ENCODE measurements at regions of chr17 and their contacts with region 1.

Region 1: DNA sequence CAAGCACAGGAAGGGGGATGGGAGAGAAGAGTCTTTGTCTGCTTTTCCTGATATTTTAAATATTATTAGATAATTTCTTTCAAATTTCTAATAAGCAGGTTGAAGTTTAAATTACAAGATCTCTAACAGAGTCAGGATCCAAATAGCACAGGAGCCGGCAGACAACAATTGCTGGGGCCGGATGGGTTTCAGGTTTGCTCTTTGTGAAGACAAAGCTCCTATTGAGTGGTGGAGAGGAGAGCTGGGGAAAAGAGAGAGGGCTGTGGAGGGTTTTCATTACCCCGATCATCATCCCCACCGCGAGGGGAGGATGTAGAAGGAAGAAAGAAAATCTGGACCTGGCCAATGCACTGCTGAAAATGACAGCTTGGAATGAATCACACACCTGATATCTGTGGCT is 197.3 kb downstream of the SOX9 start:
- DNase-seq: no peak
- ATAC-seq: peak; percentile 13
- H3K4me3 ChIP-seq: no peak overlapping the region
- H3K27ac ChIP-seq: no peak overlapping the region
- H3K4me1 ChIP-seq: peaks cover 16% of the 10 kb centered on the region
- H3K27me3 ChIP-seq: no peaks in the 10 kb centered on the region
- CTCF ChIP-seq: no peak
- EP300 ChIP-seq: 0 out of 4 replicates have a peak, but pooled peaks of 1 of the 2 experiments have one; percentile 4
- POLR2A ChIP-seq: no peak
- RAD21 ChIP-seq: no peak

Region 2: DNA sequence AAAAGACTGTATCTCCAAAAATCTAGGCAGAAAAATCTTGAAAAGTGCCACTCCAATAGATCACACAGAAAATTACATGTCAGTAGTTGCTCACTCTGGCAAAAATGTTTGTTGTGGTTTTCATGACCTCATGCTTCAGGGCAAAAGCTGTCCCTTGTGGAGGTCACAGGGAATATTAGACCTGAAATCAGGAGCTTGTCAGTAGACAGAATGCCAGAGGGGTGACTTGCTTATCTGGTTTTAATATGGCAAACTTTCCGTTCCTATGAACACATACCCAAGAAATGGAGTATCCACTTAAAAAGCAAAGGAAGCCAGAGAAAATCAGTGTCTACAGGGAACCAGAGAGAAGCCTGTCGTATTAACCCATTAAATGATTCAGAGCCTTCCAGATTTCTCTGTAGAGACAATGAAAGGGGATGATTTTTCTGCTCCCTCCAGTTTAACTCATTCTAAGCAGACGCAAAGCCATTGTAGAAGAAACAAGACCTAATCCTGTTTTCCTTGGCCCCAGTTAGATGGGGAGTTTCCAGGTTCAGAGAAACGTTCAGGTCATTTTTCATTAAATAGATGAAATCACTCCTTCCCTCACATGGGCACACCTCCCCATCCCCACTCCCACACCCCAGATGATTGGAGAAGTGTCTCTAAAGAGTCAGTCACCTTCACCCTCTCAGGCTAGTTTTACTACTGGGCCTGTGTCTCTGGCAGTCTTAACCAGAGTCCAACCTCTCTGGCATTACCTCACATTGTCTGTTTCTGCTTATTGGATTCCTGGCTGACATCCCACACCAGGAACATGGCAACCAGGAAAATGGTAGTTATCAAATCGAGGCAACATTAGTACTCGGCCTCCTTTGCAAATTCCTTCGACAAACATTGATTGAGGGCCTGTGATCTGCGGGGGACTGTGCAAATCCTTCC is 191.3 kb before region 1 on chr17:
- CTCF ChIA-PET with region 1: no interaction called
- POLR2A ChIA-PET with region 1: no interaction called
- RAD21 ChIA-PET with region 1: interaction called, 13 read pairs
- SMC1A ChIA-PET with region 1: interaction called, 5 read pairs
- in situ Hi-C with region 1: no loop called
- intact Hi-C with region 1: loop called (anchors 2 kb)
- DNase-seq: no peak
- ATAC-seq: peak; percentile 31; the same call in 2 of the 3 replicates
- H3K4me3 ChIP-seq: no peak overlapping the region
- H3K27ac ChIP-seq: no peak overlapping the region
- H3K4me1 ChIP-seq: no peaks in the 10 kb centered on the region
- H3K27me3 ChIP-seq: no peaks in the 10 kb centered on the region
- CTCF ChIP-seq: no peak
- EP300 ChIP-seq: no peak
- POLR2A ChIP-seq: no peak
- RAD21 ChIP-seq: no peak

Region 3: DNA sequence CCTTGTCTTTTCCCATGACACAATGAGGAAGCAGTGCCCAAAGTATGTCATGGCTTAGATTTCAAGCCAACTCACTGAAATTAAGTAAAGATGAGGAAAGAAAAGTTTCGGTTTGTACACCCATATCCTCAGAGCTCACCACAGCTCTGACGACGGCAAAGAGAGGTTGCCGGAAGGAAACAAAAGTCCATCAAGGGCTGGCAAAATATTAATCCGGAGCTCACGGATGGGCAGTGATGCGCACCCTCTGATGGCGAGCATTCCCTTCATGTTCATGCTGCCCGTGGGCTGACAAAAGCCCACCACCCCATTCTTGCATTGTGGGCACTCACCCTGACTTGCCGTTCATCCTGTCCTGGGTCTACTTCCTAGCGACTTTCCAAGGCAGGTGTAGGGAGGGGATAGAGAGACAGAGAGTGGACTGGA is 94.3 kb before region 1 on chr17:
- CTCF ChIA-PET with region 1: no interaction called
- POLR2A ChIA-PET with region 1: no interaction called
- RAD21 ChIA-PET with region 1: no interaction called
- SMC1A ChIA-PET with region 1: no interaction called
- in situ Hi-C with region 1: no loop called
- intact Hi-C with region 1: no loop called
- DNase-seq: no peak
- ATAC-seq: no peak
- H3K4me3 ChIP-seq: no peak overlapping the region
- H3K27ac ChIP-seq: no peak overlapping the region
- H3K4me1 ChIP-seq: no peaks in the 10 kb centered on the region
- H3K27me3 ChIP-seq: peaks cover 4 to 5% of the 10 kb centered on the region in 2 experiments
- CTCF ChIP-seq: no peak
- EP300 ChIP-seq: no peak
- POLR2A ChIP-seq: no peak
- RAD21 ChIP-seq: no peak

Region 4: DNA sequence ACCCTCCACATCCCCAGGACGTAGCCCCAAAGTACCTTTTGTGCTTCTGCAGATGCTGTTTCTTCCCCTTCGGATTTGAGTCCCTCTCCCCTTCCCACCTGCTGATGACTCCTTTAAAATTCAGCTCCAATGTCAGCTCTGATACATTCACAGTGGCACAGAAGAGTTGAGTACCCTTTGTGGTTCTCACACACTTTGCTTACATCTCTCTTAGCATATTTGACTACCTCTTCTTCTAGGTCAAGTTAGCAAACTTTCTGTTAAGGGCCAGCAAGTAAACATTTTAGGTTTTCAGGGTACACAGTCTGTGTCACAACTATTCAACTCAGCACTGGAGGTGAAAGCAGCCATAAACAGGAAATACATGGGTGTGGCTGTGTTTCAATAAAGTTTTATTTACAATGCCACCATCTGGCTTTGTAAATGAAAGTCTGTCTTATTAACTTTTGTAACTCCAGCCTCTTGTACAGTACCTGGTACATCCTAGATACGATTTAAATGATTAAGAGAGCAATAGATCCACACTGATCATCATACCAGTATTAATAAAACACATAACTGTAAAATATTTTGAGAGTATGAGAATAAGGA is 35.6 kb before region 1 on chr17:
- CTCF ChIA-PET with region 1: no interaction called
- POLR2A ChIA-PET with region 1: no interaction called
- RAD21 ChIA-PET with region 1: no interaction called
- SMC1A ChIA-PET with region 1: no interaction called
- in situ Hi-C with region 1: no loop called
- intact Hi-C with region 1: no loop called
- DNase-seq: no peak
- ATAC-seq: no peak
- H3K4me3 ChIP-seq: no peak overlapping the region
- H3K27ac ChIP-seq: no peak overlapping the region
- H3K4me1 ChIP-seq: no peaks in the 10 kb centered on the region
- H3K27me3 ChIP-seq: no peaks in the 10 kb centered on the region
- CTCF ChIP-seq: no peak
- EP300 ChIP-seq: no peak
- POLR2A ChIP-seq: no peak
- RAD21 ChIP-seq: no peak

Region 5: GRCh38 chr17:72306037-72306436 is 12.1 kb before region 1 on chr17:
- CTCF ChIA-PET with region 1: interaction called, 8 read pairs
- POLR2A ChIA-PET with region 1: no interaction called
- RAD21 ChIA-PET with region 1: interaction called, 3 read pairs
- SMC1A ChIA-PET with region 1: interaction called, 13 read pairs
- in situ Hi-C with region 1: no loop called
- intact Hi-C with region 1: no loop called
- DNase-seq: no peak
- ATAC-seq: no peak
- H3K4me3 ChIP-seq: no peak overlapping the region
- H3K27ac ChIP-seq: no peak overlapping the region
- H3K4me1 ChIP-seq: peaks cover 15% of the 10 kb centered on the region
- H3K27me3 ChIP-seq: no peaks in the 10 kb centered on the region
- CTCF ChIP-seq: no peak
- EP300 ChIP-seq: no peak
- POLR2A ChIP-seq: no peak
- RAD21 ChIP-seq: no peak

Region 6: DNA sequence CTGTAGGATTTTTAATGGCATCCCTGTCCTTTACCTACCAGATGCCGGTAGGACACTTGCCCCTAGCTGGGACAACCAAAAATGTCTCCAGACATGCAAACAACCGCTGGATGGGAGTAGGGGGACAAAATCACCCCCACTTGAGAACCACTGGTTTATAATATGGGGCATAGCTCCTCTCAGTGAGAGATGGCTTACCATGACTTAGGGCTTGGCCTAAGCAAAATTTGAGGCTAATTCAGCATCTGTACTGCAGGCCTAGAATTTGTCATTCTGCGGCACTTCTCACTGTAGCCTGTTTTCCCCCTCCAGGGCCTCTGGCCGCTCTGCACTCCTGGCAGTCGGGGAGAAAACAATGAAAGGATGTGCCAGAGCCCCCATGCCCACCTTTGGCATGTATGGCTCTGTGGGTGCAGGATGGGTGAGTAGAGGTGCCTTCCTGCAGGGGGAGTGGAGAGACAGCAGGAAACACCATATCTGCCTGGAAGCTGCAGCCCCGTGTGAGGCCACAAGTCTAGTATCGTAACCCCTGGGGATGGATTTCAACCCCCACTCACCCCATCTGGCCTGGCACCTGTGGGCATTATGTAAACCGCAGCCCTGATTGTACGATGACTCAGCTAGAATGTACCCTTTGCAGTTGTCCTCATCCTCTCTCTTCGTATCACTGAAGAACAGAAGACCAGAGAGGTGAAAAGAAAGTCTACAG is 70.8 kb after region 1 on chr17:
- CTCF ChIA-PET with region 1: interaction called, 3 read pairs
- POLR2A ChIA-PET with region 1: interaction called, 3 read pairs
- RAD21 ChIA-PET with region 1: interaction called, 12 read pairs
- SMC1A ChIA-PET with region 1: interaction called, 9 read pairs
- in situ Hi-C with region 1: no loop called
- intact Hi-C with region 1: no loop called
- DNase-seq: peak; percentile 93
- ATAC-seq: peak; percentile 77
- H3K4me3 ChIP-seq: no peak overlapping the region
- H3K27ac ChIP-seq: 0 out of 2 replicates have a peak overlapping the region, but pooled peaks have one; percentile 14
- H3K4me1 ChIP-seq: peaks cover 40% of the 10 kb centered on the region
- H3K27me3 ChIP-seq: no peaks in the 10 kb centered on the region
- CTCF ChIP-seq: peak; percentile 41 to 64 (median 47); a peak in 5 of 6 replicates
- EP300 ChIP-seq: peak in 1 of 2 experiments; percentile 62; a peak in 1 of 4 replicates
- POLR2A ChIP-seq: no peak
- RAD21 ChIP-seq: peak; percentile 55; the same call in 1 of the 2 replicates